B cell (primary cell): ENCODE measurements at regions of chr1 and their contacts with region 1.

Region 1: DNA sequence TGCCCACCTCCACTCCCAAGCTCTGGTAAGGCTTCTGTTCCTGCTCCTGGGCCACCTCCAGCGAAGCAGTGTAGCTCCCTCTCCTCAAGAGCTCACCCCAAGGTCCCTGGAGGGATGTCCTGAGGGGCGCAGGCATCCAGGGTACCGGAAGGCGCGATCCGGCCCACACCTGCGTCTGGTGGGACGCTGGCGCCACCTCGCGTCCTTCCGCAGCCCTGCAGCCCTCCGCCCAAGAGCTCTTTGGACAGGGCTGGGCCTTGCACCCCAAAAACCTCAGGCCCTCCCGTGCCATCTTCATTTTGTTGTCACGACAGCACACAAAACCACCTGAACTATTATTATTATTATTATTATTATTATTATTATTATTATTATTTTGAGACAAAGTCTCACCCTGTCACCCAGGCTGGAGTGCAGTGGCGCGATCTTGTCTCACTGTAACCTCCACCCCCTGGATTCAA is 49.2 kb upstream of the PAX7 start:
- DNase-seq: peak; percentile 18
- ATAC-seq: no peak
- H3K4me3 ChIP-seq: no peak overlapping the region
- H3K4me3 Mint-ChIP-seq: no peak overlapping the region
- H3K27ac ChIP-seq: no peak overlapping the region
- H3K27ac Mint-ChIP-seq: no peak overlapping the region
- H3K4me1 ChIP-seq: no peaks in the 10 kb centered on the region
- H3K4me1 Mint-ChIP-seq: no peaks in the 10 kb centered on the region
- H3K27me3 ChIP-seq: peaks cover 0 to 4% (median 0%) of the 10 kb centered on the region in 4 experiments
- H3K27me3 Mint-ChIP-seq: peaks cover 23% of the 10 kb centered on the region
- CTCF ChIP-seq: peak; percentile 66

Region 2: DNA sequence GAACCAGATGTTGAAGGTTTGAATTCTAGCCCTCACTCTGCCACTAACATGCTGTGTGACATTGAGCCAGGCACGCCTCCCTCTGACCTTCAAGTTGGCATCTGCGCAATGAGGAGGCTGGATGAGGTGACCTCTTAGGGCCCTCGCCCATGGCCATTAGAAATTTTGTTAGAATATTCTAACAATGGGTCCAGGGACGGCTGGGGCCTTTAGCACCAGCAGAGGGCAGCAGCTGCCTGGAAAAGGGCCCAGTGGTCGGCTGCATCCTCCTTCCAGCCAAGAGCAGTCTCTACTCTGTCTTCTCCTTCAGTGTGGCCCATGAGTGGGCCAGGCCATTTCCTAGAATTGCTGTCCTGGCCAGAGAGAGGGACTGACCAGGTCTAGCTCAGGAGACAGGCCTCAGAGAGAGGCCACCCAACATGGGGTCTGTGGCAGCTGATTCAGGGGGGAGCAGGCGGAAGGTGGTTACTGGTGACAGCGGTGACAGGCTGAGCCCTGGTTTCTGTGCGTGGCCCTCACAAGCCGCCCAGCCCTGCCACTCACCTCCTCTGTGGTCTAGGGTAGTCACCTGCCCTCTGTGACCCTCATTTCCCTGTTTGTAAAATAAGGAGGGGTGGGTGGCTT is 927.6 kb before region 1 on chr1:
- CTCF ChIA-PET with region 1: no interaction called
- POLR2A ChIA-PET with region 1: no interaction called
- intact Hi-C with region 1: loop called (anchors 5 kb)
- DNase-seq: peak; percentile 29
- ATAC-seq: peak; percentile 10
- H3K4me3 ChIP-seq: no peak overlapping the region
- H3K4me3 Mint-ChIP-seq: no peak overlapping the region
- H3K27ac ChIP-seq: no peak overlapping the region
- H3K27ac Mint-ChIP-seq: no peak overlapping the region
- H3K4me1 ChIP-seq: no peaks in the 10 kb centered on the region
- H3K4me1 Mint-ChIP-seq: peaks cover 2% of the 10 kb centered on the region
- H3K27me3 ChIP-seq: no peaks in the 10 kb centered on the region
- H3K27me3 Mint-ChIP-seq: no peaks in the 10 kb centered on the region
- CTCF ChIP-seq: peak; percentile 69

Region 3: GRCh38 chr1:18693256-18694098 is 112.0 kb after region 1 on chr1:
- CTCF ChIA-PET with region 1: no interaction called
- POLR2A ChIA-PET with region 1: no interaction called
- intact Hi-C with region 1: no loop called
- DNase-seq: no peak
- ATAC-seq: no peak
- H3K4me3 ChIP-seq: no peak overlapping the region
- H3K4me3 Mint-ChIP-seq: no peak overlapping the region
- H3K27ac ChIP-seq: no peak overlapping the region
- H3K27ac Mint-ChIP-seq: no peak overlapping the region
- H3K4me1 ChIP-seq: no peaks in the 10 kb centered on the region
- H3K4me1 Mint-ChIP-seq: no peaks in the 10 kb centered on the region
- H3K27me3 ChIP-seq: peaks cover 0 to 15% (median 0%) of the 10 kb centered on the region in 4 experiments
- H3K27me3 Mint-ChIP-seq: peaks cover 34% of the 10 kb centered on the region
- CTCF ChIP-seq: no peak